ENCODE measurements at regions of chr3 and their contacts with region 1.

Region 1: GRCh38 chr3:167843886-167844285 is 108.4 kb downstream of the SERPINI1 start:
- DNase-seq: no peak
- ATAC-seq: peak; percentile 79
- H3K4me3 Mint-ChIP-seq: peak overlapping the region; percentile 38
- H3K27ac Mint-ChIP-seq: peak overlapping the region; percentile 46
- H3K4me1 Mint-ChIP-seq: peaks cover 34% of the 10 kb centered on the region
- H3K27me3 Mint-ChIP-seq: no peaks in the 10 kb centered on the region
- CTCF ChIP-seq: no peak

Region 2: GRCh38 chr3:167876620-167877281 is 32.9 kb after region 1 on chr3:
- CTCF ChIA-PET with region 1: interaction called, 15 read pairs
- POLR2A ChIA-PET with region 1: no interaction called
- intact Hi-C with region 1: loop called (anchors 2 kb)
- DNase-seq: no peak
- ATAC-seq: no peak
- H3K4me3 Mint-ChIP-seq: no peak overlapping the region
- H3K27ac Mint-ChIP-seq: no peak overlapping the region
- H3K4me1 Mint-ChIP-seq: peaks cover under 1% of the 10 kb centered on the region
- H3K27me3 Mint-ChIP-seq: peaks cover 4% of the 10 kb centered on the region
- CTCF ChIP-seq: no peak

Measured in activated B cell treated with CpG ODN at 0.5 μM for 24 hours (primary cell).